Lower lobe of right lung (tissue), 2 donors: ENCODE measurements at regions of chrX and their contacts with region 1.

Region 1: DNA sequence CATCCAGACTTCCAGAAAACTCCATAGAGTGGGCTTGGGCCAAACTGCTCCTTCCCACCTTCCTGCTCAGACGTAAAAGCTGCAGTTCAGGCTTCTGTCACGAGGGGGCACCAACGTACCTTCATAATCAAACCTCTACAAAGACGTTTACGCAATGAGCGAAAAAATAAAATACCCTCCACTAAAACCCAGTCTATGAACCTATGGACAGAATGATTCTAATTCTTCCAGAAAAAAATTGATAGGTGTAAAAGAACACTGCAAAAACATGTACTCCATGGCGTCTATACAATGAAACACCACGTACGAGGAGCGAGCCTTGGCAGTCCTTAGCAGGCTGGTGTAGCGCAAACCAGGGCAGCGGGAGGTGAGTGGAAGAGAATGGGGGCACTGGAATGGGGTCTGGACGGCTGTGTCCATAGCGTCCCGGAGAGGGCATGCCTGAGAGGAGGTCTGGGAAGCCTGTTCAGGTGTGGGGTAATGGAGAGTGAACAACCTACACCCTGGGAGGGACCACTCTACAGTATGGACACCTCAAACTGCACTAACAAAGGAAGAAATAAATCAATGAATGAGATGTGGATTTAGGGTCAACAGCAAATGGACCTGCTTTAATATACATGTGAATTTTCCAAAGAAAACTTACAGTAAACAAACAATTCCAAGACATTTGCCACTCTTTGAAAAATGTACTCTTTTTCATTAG is 14.4 kb upstream of the RAB40A start:
- DNase-seq: peak; percentile 65
- ATAC-seq: peak; percentile 73 to 86
- H3K4me3 ChIP-seq: peak overlapping the region; percentile 41
- H3K27ac ChIP-seq: no peak overlapping the region
- H3K4me1 ChIP-seq: no peaks in the 10 kb centered on the region
- H3K27me3 ChIP-seq: no peaks in the 10 kb centered on the region
- CTCF ChIP-seq: peak; percentile 66

Region 2: GRCh38 chrX:103823591-103823990 is 289.9 kb after region 1 on chrX:
- intact Hi-C with region 1: loop called (anchors 10 kb)
- DNase-seq: no peak
- ATAC-seq: no peak
- H3K4me3 ChIP-seq: no peak overlapping the region
- H3K27ac ChIP-seq: no peak overlapping the region
- H3K4me1 ChIP-seq: no peaks in the 10 kb centered on the region
- H3K27me3 ChIP-seq: no peaks in the 10 kb centered on the region
- CTCF ChIP-seq: no peak

Region 3: GRCh38 chrX:103932133-103932532 is 398.5 kb after region 1 on chrX:
- intact Hi-C with region 1: no loop called
- DNase-seq: no peak
- ATAC-seq: no peak
- H3K4me3 ChIP-seq: no peak overlapping the region
- H3K27ac ChIP-seq: no peak overlapping the region
- H3K4me1 ChIP-seq: no peaks in the 10 kb centered on the region
- H3K27me3 ChIP-seq: no peaks in the 10 kb centered on the region
- CTCF ChIP-seq: no peak